ENCODE measurements at regions of chr6 and their contacts with region 1.

Region 1: DNA sequence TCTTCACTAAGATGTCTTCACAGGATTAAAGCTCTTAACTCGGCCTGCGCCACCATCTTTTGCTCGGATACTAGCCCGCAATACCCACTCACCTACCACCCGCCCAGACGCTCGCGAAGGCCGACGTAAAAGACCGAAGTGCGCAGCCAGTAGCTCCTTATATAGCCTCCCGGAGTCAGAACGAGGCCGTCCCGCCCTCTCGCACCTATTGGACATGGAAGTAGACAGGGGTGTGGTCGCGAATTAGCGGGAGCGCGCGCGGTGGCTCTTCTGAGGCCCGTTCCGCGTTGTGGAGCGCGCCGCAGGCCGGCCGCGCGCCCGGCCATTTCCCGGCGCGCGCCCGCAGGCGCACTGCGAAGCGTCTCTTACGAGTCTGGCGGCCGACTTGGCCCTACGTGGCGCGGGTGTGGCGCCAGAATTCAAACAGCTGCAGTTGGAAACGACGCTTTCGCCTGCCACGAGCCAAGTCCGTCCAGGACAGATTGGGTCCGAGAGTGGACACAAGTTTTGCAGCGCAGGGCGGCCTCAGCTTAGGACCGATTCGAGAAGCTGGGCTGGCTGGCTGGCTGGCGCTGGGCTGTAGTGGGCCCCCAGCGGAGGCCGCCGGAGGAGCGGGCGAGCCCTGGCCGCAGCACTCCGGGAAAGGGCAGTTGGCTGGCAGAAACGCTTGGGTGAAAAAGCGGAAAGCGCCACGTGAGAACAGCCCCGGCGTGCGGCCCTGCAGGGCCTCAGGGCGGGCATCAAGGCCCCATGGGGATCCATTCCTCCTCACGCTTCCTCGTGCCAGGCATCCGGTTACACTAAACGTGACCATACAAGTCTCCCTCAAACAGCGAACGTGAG is 36.1 kb upstream of the SYNCRIP start:
- DNase-seq: peak; percentile 97 to 99
- H3K4me3 ChIP-seq: peak overlapping the region; percentile 90 to 97
- H3K27ac ChIP-seq: peak overlapping the region; percentile 86
- H3K4me1 ChIP-seq: peaks cover 36% of the 10 kb centered on the region
- H3K27me3 ChIP-seq: no peaks in the 10 kb centered on the region
- CTCF ChIP-seq: peak in 1 of 3 experiments; percentile 9
- POLR2A ChIP-seq: peak; percentile 27 to 99

Region 2: DNA sequence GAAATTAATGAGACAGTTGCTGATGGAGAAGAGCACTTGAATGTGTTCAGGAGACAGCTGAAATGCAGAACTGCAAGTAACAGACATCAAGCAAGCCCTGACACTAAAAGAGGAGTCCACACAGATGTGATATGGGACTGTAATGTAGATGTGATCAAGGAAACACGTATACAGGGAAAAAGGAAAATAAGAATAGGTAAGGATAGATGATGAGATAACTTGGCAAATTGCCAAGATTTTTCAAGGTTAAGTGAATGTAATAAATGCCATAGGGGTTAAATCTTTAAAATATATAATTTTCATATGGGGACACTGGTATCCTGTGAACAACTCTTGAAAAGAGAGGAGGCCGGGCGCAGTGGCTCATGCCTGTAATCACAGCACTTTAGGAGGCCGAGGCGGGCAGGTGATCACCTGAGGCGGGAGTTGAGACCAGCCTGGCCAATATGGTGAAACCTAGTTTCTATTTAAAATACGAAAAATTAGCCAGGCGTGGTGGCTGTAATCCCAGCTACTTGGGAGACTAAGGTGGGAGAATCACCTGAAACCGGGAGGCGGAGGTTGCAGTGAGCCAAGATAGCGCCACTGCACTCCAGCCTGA is 78.0 kb before region 1 on chr6:
- intact Hi-C with region 1: loop called (anchors 2 kb)
- DNase-seq: no peak
- H3K4me3 ChIP-seq: no peak overlapping the region
- H3K27ac ChIP-seq: no peak overlapping the region
- H3K4me1 ChIP-seq: no peaks in the 10 kb centered on the region
- H3K27me3 ChIP-seq: no peaks in the 10 kb centered on the region
- CTCF ChIP-seq: no peak
- POLR2A ChIP-seq: no peak

Measured in vagina (tissue), 2 donors.